Activated CD8-positive, alpha-beta T cell treated with anti-CD3 and anti-CD28 coated beads, Interleukin-2, amount 10 ng/mL, durations not matched to agents 7 days and 5 days (primary cell): ENCODE measurements at regions of chr2 and their contacts with region 1.

Region 1: GRCh38 chr2:216057688-216058193 is 23.9 kb downstream of the PECR start:
- DNase-seq: peak; percentile 82
- ATAC-seq: peak; percentile 98
- H3K4me3 Mint-ChIP-seq: peak overlapping the region; percentile 78
- H3K27ac Mint-ChIP-seq: peak overlapping the region; percentile 97
- H3K4me1 Mint-ChIP-seq: peaks cover 32% of the 10 kb centered on the region
- H3K27me3 Mint-ChIP-seq: no peaks in the 10 kb centered on the region

Region 2: DNA sequence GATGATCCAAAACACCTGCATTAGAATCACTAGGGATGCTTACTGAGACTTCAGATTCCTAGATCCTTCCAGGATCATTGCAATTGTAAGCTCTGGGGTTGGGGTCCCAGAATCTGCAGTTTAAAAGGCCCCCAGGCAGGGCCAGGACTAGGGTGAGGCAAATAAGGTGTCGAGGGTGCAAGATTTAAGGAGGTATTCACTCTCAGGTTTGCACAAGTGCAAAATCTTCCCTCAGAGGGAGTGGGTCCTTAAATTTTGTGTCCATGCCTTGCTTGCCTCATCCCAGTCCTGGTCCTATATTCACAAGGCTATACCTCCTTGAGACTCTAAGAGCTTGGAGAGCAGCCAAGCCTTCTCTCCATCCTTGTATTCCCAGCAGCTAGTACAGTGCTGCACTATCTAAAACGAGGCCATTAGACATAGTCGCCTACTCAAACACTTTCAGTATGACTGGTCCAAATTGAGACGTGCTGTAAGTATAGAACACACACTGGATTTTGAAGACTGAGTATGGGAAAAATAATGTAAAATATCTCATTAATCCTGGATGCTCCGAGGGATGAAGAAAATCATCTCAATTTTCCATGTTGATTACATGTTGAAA is 12.8 kb before region 1 on chr2:
- CTCF ChIA-PET with region 1: interaction called, 16 read pairs
- POLR2A ChIA-PET with region 1: no interaction called
- DNase-seq: no peak
- ATAC-seq: no peak
- H3K4me3 Mint-ChIP-seq: no peak overlapping the region
- H3K27ac Mint-ChIP-seq: no peak overlapping the region
- H3K4me1 Mint-ChIP-seq: no peaks in the 10 kb centered on the region
- H3K27me3 Mint-ChIP-seq: no peaks in the 10 kb centered on the region

Region 3: DNA sequence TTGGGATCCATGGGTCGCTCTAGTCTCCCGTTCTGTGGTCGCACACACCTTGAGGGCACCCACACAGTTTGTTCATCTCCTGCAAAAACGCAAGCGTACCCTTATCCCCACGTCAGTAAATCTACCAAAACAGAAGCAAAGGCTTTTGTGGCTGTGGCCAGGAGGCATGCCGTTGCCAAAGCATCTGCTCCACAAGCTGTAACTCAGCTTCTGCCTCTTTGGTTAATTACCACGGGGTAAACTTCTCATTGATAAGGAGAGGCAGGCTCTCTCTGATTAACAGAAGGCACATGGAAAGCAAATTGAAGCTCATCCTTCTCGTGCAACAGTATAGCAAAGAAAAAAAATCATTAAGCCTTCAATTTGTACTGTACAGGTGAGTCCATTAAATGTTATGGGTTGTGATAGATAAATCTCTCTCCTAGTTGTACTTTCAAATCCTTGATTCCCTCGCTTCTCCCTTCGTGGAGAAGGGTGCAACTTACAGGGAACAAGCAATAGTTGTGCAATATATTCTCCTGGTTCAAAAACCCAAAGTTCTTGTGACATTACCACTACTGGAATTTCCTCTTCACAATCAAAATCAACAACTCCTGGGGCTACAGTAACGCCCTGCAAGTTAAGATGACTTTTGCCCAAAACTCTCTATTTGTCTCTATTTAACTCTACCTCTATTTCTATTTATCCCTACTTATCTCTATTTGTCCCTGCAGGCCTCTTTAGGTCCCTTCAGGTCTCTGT is 13.5 kb after region 1 on chr2:
- CTCF ChIA-PET with region 1: interaction called, 22 read pairs
- POLR2A ChIA-PET with region 1: interaction called, 3 read pairs
- DNase-seq: no peak
- ATAC-seq: no peak
- H3K4me3 Mint-ChIP-seq: no peak overlapping the region
- H3K27ac Mint-ChIP-seq: no peak overlapping the region
- H3K4me1 Mint-ChIP-seq: peaks cover 22% of the 10 kb centered on the region
- H3K27me3 Mint-ChIP-seq: no peaks in the 10 kb centered on the region

Region 4: DNA sequence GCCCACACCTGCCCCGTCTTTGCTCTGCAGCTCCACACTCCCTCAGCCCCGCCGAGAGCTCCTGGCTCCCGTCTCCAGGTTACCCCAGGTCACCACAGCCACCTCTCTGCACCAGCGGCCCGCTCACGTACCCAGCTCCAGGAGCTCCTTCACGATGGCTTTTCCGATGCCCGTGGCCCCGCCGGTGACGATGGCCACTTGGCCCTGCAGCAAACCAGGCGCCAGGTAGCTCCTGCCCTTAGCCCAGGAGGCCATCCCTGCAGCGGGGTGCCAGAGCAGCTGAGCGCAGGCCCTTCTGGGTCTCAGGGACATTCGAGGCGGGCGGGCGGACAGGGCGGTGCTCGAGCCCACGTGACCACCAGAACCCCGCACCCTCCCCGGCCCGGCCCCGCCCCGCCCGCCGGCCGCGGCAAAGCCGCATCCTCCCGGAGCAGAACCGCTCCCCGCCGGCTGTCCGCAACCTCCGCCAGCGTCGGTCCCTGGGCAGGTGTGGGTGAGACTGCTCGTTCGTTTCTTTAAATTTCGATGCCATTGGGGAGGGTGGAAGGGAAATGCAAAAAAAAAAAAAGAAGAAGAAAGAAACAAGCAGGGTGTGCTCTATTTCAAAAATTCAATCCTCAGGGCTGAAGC is 23.9 kb after region 1 on chr2 and contains the starts of genes PECR and TMEM169:
- CTCF ChIA-PET with region 1: interaction called, 35 read pairs
- POLR2A ChIA-PET with region 1: no interaction called
- DNase-seq: peak; percentile 86
- ATAC-seq: peak; percentile 95
- H3K4me3 Mint-ChIP-seq: peak within 1 kb of the TSS; percentile 92
- H3K27ac Mint-ChIP-seq: peak within 1 kb of the TSS; percentile 83
- H3K4me1 Mint-ChIP-seq: peaks cover 54% of the 10 kb centered on the region
- H3K27me3 Mint-ChIP-seq: no peaks in the 10 kb centered on the region
- total RNA-seq, gene PECR: 29.0 to 30.3 TPM
- total RNA-seq, gene TMEM169: 1.2 to 1.4 TPM

Region 5: GRCh38 chr2:216114714-216115557 is 57.2 kb after region 1 on chr2:
- CTCF ChIA-PET with region 1: interaction called, 38 read pairs
- POLR2A ChIA-PET with region 1: interaction called, 12 read pairs
- DNase-seq: peak; percentile 99
- ATAC-seq: peak; percentile 91
- H3K4me3 Mint-ChIP-seq: peak overlapping the region; percentile 84
- H3K27ac Mint-ChIP-seq: peak overlapping the region; percentile 86
- H3K4me1 Mint-ChIP-seq: peaks cover 94% of the 10 kb centered on the region
- H3K27me3 Mint-ChIP-seq: no peaks in the 10 kb centered on the region